Astrocyte of the cerebellum (primary cell): ENCODE measurements at regions of chr2 and their contacts with region 1.

Region 1: GRCh38 chr2:192448881-192449280 is 254.1 kb upstream of the TMEFF2 start:
- DNase-seq: no peak
- H3K4me3 ChIP-seq: no peak overlapping the region
- CTCF ChIP-seq: no peak

Region 2: GRCh38 chr2:192484903-192485302 is 36.0 kb after region 1 on chr2:
- in situ Hi-C with region 1: loop called (anchors 5 kb)
- DNase-seq: no peak
- H3K4me3 ChIP-seq: no peak overlapping the region
- CTCF ChIP-seq: no peak